CD4-positive, alpha-beta T cell (primary cell): ENCODE measurements at regions of chr6 and their contacts with region 1.

Region 1: DNA sequence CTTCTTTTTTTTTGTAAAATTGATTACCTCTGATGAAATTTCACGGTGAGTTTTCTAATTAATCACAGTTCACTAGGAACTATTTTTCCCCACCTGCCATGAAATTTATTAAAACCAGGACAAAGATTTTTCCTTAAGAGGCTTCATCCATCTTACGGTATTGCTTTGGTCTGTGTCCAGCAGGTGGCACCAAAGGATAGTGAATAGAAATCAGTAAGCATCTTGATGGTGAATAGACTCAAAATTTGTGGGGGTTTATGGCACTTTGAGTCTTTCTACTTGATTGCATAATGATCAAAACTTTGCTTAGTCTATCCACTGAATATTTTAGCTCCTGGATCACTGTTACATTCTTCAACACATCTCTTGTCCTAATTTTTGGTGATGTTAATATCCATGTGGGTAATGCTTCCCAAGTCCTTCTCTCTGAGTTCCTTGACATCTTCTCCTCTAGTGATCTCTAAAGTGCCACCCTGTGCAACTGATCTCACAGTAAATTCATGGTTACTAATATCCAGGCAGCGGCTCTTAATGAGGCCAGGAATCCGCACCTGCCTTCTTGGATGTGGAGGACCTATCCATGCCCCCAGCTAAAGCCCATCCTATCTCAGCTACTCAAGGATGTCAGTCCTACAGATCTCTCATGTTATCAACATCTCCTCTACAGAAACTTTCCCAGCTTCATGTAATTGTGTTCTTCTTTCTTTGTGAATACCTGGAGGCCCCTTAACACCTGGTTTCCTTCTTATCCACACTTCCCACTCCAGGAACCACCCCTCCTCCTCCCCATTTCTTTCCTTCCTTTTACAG is 54.5 kb downstream of the STMND1 start:
- DNase-seq: peak; percentile 22 to 80 (median 48)
- ATAC-seq: no peak
- H3K4me3 ChIP-seq: no peak overlapping the region
- H3K4me3 Mint-ChIP-seq: no peak overlapping the region
- H3K27ac ChIP-seq: no peak overlapping the region
- H3K27ac Mint-ChIP-seq: no peak overlapping the region
- H3K4me1 ChIP-seq: no peaks in the 10 kb centered on the region
- H3K4me1 Mint-ChIP-seq: no peaks in the 10 kb centered on the region
- H3K27me3 ChIP-seq: no peaks in the 10 kb centered on the region
- H3K27me3 Mint-ChIP-seq: peaks cover 6% of the 10 kb centered on the region
- CTCF ChIP-seq: peak; percentile 82

Region 2: GRCh38 chr6:16752236-16752867 is 404.0 kb before region 1 on chr6:
- CTCF ChIA-PET with region 1: no interaction called
- POLR2A ChIA-PET with region 1: no interaction called
- intact Hi-C with region 1: no loop called
- DNase-seq: peak in 2 of 14 experiments; percentile 47 to 59
- ATAC-seq: no peak
- H3K4me3 ChIP-seq: no peak overlapping the region
- H3K4me3 Mint-ChIP-seq: no peak overlapping the region
- H3K27ac ChIP-seq: no peak overlapping the region
- H3K27ac Mint-ChIP-seq: no peak overlapping the region
- H3K4me1 ChIP-seq: peaks cover 3% of the 10 kb centered on the region
- H3K4me1 Mint-ChIP-seq: peaks cover 55% of the 10 kb centered on the region
- H3K27me3 ChIP-seq: no peaks in the 10 kb centered on the region
- H3K27me3 Mint-ChIP-seq: no peaks in the 10 kb centered on the region
- CTCF ChIP-seq: no peak

Region 3: DNA sequence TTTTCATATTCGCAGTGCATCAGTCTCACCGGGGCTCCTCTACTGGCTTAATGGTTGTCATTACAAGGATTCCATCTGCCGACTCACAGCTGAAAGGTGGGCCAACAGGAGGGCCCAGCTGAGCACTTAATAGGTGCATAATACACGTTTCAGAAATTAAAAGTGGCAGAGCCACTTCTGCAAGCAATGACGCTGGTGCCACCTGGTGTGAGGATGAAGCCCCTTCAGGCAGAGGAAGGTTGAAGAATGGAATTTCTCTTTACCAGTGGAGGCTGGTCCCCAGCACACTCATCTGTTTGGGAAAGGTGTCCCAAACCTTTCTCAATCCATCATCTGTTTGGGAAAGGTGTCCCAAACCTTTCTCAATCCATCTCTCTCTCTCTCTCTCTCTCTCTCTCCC is 62.6 kb before region 1 on chr6:
- CTCF ChIA-PET with region 1: no interaction called
- POLR2A ChIA-PET with region 1: no interaction called
- intact Hi-C with region 1: no loop called
- DNase-seq: peak in 1 of 14 experiments; percentile 3
- ATAC-seq: no peak
- H3K4me3 ChIP-seq: no peak overlapping the region
- H3K4me3 Mint-ChIP-seq: no peak overlapping the region
- H3K27ac ChIP-seq: no peak overlapping the region
- H3K27ac Mint-ChIP-seq: no peak overlapping the region
- H3K4me1 ChIP-seq: no peaks in the 10 kb centered on the region
- H3K4me1 Mint-ChIP-seq: no peaks in the 10 kb centered on the region
- H3K27me3 ChIP-seq: peaks cover 3 to 17% of the 10 kb centered on the region in 2 experiments
- H3K27me3 Mint-ChIP-seq: peaks cover 40% of the 10 kb centered on the region
- CTCF ChIP-seq: no peak

Region 4: GRCh38 chr6:17145162-17145561 is 11.2 kb before region 1 on chr6:
- CTCF ChIA-PET with region 1: no interaction called
- POLR2A ChIA-PET with region 1: no interaction called
- intact Hi-C with region 1: no loop called
- DNase-seq: no peak
- ATAC-seq: no peak
- H3K4me3 ChIP-seq: no peak overlapping the region
- H3K4me3 Mint-ChIP-seq: no peak overlapping the region
- H3K27ac ChIP-seq: no peak overlapping the region
- H3K27ac Mint-ChIP-seq: no peak overlapping the region
- H3K4me1 ChIP-seq: no peaks in the 10 kb centered on the region
- H3K4me1 Mint-ChIP-seq: no peaks in the 10 kb centered on the region
- H3K27me3 ChIP-seq: peaks cover 0 to 5% of the 10 kb centered on the region in 2 experiments
- H3K27me3 Mint-ChIP-seq: peaks cover 3% of the 10 kb centered on the region
- CTCF ChIP-seq: no peak

Region 5: GRCh38 chr6:17584241-17584803 is 428.0 kb after region 1 on chr6:
- CTCF ChIA-PET with region 1: no interaction called
- POLR2A ChIA-PET with region 1: no interaction called
- intact Hi-C with region 1: loop called (anchors 1 to 2 kb)
- DNase-seq: peak in 4 of 14 experiments; percentile 17 to 70 (median 61)
- ATAC-seq: peak; percentile 69
- H3K4me3 ChIP-seq: no peak overlapping the region
- H3K4me3 Mint-ChIP-seq: no peak overlapping the region
- H3K27ac ChIP-seq: no peak overlapping the region
- H3K27ac Mint-ChIP-seq: peak overlapping the region; percentile 7
- H3K4me1 ChIP-seq: peaks cover 5% of the 10 kb centered on the region
- H3K4me1 Mint-ChIP-seq: peaks cover 10% of the 10 kb centered on the region
- H3K27me3 ChIP-seq: peaks cover 0 to 3% of the 10 kb centered on the region in 2 experiments
- H3K27me3 Mint-ChIP-seq: peaks cover 5% of the 10 kb centered on the region
- CTCF ChIP-seq: peak; percentile 99

Region 6: DNA sequence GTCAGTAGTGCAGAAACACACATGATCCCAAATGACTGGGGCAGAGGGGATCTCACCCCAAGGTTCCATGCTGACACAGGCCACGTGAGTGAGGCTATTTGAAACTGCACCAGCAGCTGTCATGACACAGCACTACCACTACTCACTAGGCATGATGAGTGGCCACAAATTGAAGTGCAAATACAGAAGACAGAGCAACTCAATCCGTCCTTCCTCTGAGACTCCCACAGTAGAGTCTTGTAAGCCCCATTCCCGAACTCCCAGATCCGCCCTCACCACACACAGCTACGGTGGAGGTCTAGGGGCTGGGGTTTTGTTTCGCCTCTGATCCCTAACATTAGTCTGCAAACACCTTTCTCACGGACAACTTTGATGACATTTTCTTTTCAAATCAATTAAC is 663.7 kb after region 1 on chr6:
- CTCF ChIA-PET with region 1: no interaction called
- POLR2A ChIA-PET with region 1: no interaction called
- intact Hi-C with region 1: loop called (anchors 1 kb)
- DNase-seq: no peak
- ATAC-seq: no peak
- H3K4me3 ChIP-seq: no peak overlapping the region
- H3K4me3 Mint-ChIP-seq: no peak overlapping the region
- H3K27ac ChIP-seq: no peak overlapping the region
- H3K27ac Mint-ChIP-seq: no peak overlapping the region
- H3K4me1 ChIP-seq: no peaks in the 10 kb centered on the region
- H3K4me1 Mint-ChIP-seq: no peaks in the 10 kb centered on the region
- H3K27me3 ChIP-seq: no peaks in the 10 kb centered on the region
- H3K27me3 Mint-ChIP-seq: peaks cover 7% of the 10 kb centered on the region
- CTCF ChIP-seq: no peak

Region 7: GRCh38 chr6:18122124-18123093 is 966.1 kb after region 1 on chr6 and contains the start of gene NHLRC1:
- CTCF ChIA-PET with region 1: no interaction called
- POLR2A ChIA-PET with region 1: no interaction called
- intact Hi-C with region 1: loop called in 1 of 2 experiments (anchors 1 kb)
- DNase-seq: peak; percentile 31 to 87 (median 64)
- ATAC-seq: peak; percentile 93
- H3K4me3 ChIP-seq: peak within 1 kb of the TSS; percentile 39
- H3K4me3 Mint-ChIP-seq: peak within 1 kb of the TSS; percentile 86
- H3K27ac ChIP-seq: no peak within 1 kb of the TSS
- H3K27ac Mint-ChIP-seq: no peak within 1 kb of the TSS
- H3K4me1 ChIP-seq: peaks cover 13% of the 10 kb centered on the region
- H3K4me1 Mint-ChIP-seq: peaks cover 13% of the 10 kb centered on the region
- H3K27me3 ChIP-seq: no peaks in the 10 kb centered on the region
- H3K27me3 Mint-ChIP-seq: peaks cover 32% of the 10 kb centered on the region
- CTCF ChIP-seq: peak; percentile 42
- total RNA-seq, gene NHLRC1: 0.11 TPM in 1 of 2 experiments, not detected in the other

Region 8: GRCh38 chr6:18323935-18324705 is 1167.8 kb after region 1 on chr6:
- CTCF ChIA-PET with region 1: no interaction called
- POLR2A ChIA-PET with region 1: no interaction called
- intact Hi-C with region 1: loop called in 1 of 2 experiments (anchors 10 kb)
- DNase-seq: peak in 4 of 14 experiments; percentile 26 to 62 (median 52)
- ATAC-seq: no peak
- H3K4me3 ChIP-seq: no peak overlapping the region
- H3K4me3 Mint-ChIP-seq: no peak overlapping the region
- H3K27ac ChIP-seq: no peak overlapping the region
- H3K27ac Mint-ChIP-seq: no peak overlapping the region
- H3K4me1 ChIP-seq: no peaks in the 10 kb centered on the region
- H3K4me1 Mint-ChIP-seq: no peaks in the 10 kb centered on the region
- H3K27me3 ChIP-seq: no peaks in the 10 kb centered on the region
- H3K27me3 Mint-ChIP-seq: peaks cover 15% of the 10 kb centered on the region
- CTCF ChIP-seq: peak; percentile 96

Region 9: GRCh38 chr6:18503593-18504231 is 1347.4 kb after region 1 on chr6:
- CTCF ChIA-PET with region 1: no interaction called
- POLR2A ChIA-PET with region 1: no interaction called
- intact Hi-C with region 1: loop called (anchors 1 to 5 kb)
- DNase-seq: peak in 13 of 14 experiments; percentile 2 to 71 (median 16)
- ATAC-seq: no peak
- H3K4me3 ChIP-seq: no peak overlapping the region
- H3K4me3 Mint-ChIP-seq: no peak overlapping the region
- H3K27ac ChIP-seq: no peak overlapping the region
- H3K27ac Mint-ChIP-seq: no peak overlapping the region
- H3K4me1 ChIP-seq: no peaks in the 10 kb centered on the region
- H3K4me1 Mint-ChIP-seq: no peaks in the 10 kb centered on the region
- H3K27me3 ChIP-seq: peaks cover 0 to 4% of the 10 kb centered on the region in 2 experiments
- H3K27me3 Mint-ChIP-seq: no peaks in the 10 kb centered on the region
- CTCF ChIP-seq: peak; percentile 84